Cardiac septum (tissue), 1 donor: ENCODE measurements at regions of chr19 and their contacts with region 1.

Region 1: DNA sequence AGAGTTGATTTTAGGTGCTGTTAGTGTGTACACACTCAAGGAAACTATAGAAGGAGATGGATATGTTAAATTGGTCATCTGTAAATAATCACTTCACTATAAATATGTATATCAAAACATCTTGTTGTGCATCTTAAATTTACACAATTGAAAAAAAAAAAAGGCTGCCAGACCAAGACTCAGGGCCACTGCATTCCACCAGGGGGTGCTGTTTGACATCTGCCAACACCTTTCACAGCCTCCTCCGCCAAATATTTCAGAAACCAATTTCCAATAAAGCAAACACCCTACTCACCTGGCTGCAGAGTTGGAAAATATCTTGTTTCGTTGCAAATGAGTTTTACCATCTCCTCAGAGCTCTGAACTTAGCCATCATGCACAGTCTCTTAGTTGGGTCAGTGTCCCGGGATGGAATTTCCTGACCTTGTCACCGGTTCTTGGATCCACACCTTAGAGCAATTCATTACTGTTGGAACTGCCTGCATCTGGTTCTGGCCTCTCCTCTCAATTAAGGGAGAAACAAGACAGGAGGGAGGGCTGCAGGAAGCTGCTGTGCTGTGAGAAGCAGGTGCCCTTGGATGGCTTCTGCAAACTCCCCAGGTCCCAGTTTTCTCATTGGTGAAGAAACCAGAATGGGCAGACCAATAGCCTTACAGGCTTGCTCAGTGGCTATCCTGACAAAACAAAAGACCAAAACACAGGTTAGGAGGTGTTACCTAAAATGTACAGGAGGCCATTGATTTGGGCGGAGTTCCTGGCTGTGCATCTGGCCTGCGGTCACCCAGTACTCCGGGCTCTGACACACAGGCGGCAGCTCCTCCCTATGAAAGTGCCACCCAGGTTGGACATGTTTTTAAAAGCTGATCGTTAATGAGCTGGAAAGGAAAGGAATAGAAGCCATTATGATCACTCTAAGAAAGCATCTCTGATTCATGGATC is 746.6 kb downstream of the UQCRFS1 start:
- DNase-seq: no peak

Region 2: DNA sequence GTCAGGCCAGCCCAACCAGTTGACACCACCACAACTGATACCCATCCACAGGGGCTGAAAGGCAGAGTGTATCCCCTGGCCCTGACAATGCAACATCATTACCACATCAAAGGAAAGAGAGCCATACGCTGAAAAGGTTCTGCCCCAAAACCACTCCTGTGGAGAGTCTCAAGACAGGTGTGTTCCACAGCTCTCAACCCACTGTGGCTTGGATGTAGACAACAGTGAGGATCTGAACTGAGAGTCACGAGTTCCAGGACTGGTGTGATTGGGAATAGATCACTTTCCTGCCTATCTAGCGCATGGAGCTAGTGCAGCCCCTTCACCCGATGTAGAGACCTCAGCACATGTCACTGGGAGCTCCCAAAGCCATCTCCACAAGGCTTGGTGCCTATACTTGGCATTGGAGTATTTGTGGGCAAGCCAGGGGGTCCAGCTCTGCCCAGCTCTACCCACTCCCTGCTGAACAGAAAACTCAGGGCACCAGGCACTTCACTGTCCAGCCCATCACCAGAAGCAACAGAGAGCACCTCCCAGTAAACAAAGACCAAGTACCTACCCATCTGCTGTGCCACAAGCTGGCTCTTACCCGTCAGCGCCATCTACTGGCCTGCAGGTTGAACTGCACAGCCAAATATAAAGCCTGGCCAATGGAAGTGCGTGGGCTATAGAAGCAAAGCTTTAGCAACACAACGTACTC is 167.1 kb after region 1 on chr19:
- intact Hi-C with region 1: loop called (anchors 2 kb)
- DNase-seq: no peak